A549 (cell line): ENCODE measurements at regions of chr3 and their contacts with region 1.

Region 1: GRCh38 chr3:70064194-70064779 is 64.8 kb downstream of the SAMMSON start:
- DNase-seq: peak; percentile 4 to 51
- ATAC-seq: peak in 1 of 2 experiments; percentile 48; a peak in 1 of 6 replicates
- H3K4me3 ChIP-seq: no peak overlapping the region
- H3K27ac ChIP-seq: no peak overlapping the region
- H3K4me1 ChIP-seq: no peaks in the 10 kb centered on the region
- CTCF ChIP-seq: peak; percentile 79
- EP300 ChIP-seq: no peak
- POLR2A ChIP-seq: no peak
- RAD21 ChIP-seq: peak; percentile 79 to 80

Region 2: DNA sequence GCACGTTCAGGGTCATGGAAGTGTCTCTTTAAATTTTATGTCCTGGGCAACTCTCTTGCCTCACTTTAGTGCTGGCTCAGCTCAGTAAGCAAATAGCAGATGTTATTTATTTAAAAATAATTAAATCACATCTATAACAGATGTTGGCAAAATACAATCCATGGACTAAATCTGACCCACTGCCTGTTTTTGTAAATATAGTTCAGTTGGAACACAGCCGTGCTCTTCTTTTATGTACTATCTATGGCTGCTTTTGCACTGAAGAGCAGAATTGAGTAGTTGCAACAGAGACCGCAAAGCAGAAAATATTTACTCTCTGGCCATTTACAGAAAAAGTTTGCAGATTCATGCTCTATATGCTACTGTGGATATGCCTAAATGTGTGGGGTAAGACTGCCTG is 14.5 kb after region 1 on chr3:
- CTCF ChIA-PET with region 1: interaction called, 21 read pairs
- POLR2A ChIA-PET with region 1: no interaction called
- DNase-seq: no peak
- ATAC-seq: no peak
- H3K4me3 ChIP-seq: no peak overlapping the region
- H3K27ac ChIP-seq: no peak overlapping the region
- H3K4me1 ChIP-seq: no peaks in the 10 kb centered on the region
- CTCF ChIP-seq: no peak
- EP300 ChIP-seq: no peak
- POLR2A ChIP-seq: no peak
- RAD21 ChIP-seq: no peak

Region 3: DNA sequence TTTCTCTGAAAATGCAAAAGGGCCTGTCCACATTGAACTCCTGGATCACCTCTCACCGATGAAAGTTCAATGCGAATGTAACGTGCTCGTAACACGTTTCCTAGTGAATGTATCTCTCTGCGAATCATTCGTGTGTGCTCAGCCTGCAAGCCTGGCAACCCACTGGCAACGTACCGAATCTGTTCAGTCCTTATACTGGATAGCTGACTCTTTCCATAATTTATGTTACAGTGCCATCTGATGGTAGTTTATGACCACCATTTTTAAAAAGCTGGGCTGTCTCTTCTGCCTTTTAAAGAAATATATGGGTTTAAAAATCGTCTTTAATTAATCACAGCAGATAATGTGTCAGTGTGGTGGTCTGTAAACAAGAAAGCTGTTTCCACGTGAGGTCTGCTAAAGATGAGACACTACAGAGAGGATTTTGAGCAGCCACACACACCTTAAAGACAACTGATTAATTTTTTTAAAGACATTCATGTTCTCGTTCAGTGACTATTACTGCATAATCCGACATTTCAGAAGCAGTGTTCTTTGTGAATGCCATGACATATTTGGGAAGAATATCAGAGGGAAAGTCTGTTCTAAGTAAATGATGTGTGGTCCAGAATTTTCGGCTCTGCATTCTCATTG is 1588.6 kb after region 1 on chr3:
- CTCF ChIA-PET with region 1: interaction called, 22 read pairs
- POLR2A ChIA-PET with region 1: no interaction called
- DNase-seq: peak; percentile 34 to 38
- ATAC-seq: peak; percentile 73 to 84; a peak in 4 of 6 replicates
- H3K4me3 ChIP-seq: no peak overlapping the region
- H3K27ac ChIP-seq: peak overlapping the region in 1 of 2 experiments; percentile 51; a peak in 2 of 6 replicates
- H3K4me1 ChIP-seq: peaks cover 7% of the 10 kb centered on the region; the same call in 1 of the 3 replicates
- CTCF ChIP-seq: peak; percentile 78
- EP300 ChIP-seq: no peak
- POLR2A ChIP-seq: no peak
- RAD21 ChIP-seq: peak; percentile 80 to 87

Region 4: GRCh38 chr3:71657831-71658530 is 1593.7 kb after region 1 on chr3:
- CTCF ChIA-PET with region 1: interaction called, 22 read pairs
- POLR2A ChIA-PET with region 1: no interaction called
- DNase-seq: peak in 1 of 2 experiments; percentile 28
- ATAC-seq: peak in 1 of 2 experiments; percentile 39; a peak in 1 of 6 replicates
- H3K4me3 ChIP-seq: no peak overlapping the region
- H3K27ac ChIP-seq: no peak overlapping the region
- H3K4me1 ChIP-seq: no peaks in the 10 kb centered on the region
- CTCF ChIP-seq: no peak
- EP300 ChIP-seq: no peak
- POLR2A ChIP-seq: no peak
- RAD21 ChIP-seq: no peak